A549 (cell line): ENCODE measurements at regions of chr19 and their contacts with region 1.

Region 1: DNA sequence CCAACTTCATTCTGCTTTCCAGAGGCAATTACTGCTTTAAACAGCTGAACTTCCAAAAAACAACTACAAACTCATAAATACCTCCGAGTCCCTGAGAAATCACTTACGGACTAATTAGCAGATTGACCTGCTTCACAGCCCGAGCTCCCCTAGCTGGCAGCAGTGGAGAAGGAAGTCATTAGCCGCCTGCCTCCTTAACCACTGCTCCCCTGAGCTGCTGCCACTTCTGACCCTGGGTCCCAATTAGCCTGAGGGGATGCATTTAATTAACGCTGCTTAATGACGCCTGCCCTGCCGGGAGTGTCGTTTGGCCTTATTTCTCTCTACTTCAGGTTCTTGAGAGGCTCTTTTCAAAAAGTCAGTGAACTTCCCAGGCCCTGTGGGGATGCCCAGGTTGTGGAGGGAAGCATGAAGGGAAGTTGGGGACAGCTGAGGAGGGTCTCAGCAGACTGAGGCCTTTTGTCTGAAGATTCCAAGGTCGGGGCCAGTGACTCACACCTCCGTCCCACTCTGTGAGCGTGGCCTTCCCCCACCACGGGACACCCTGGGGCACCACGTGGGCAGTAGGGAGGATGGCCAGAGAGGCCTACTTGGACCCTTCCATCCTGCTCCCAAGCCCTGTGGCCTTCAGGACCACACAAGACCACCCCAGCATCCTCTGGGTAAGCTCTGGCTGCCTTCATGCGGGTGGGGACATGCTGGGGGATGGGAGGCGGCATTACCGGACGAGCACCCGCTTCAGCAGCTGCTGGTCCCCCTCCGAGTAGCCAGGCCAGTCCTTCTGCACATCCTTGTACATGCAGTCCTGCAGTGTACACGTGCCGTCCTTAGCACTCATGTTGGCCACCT is 19.8 kb upstream of the ISYNA1 start:
- DNase-seq: no peak
- ATAC-seq: no peak
- H3K4me3 ChIP-seq: no peak overlapping the region
- H3K27ac ChIP-seq: no peak overlapping the region
- H3K4me1 ChIP-seq: peaks cover 24% of the 10 kb centered on the region
- CTCF ChIP-seq: no peak
- EP300 ChIP-seq: no peak
- POLR2A ChIP-seq: no peak
- RAD21 ChIP-seq: no peak

Region 2: DNA sequence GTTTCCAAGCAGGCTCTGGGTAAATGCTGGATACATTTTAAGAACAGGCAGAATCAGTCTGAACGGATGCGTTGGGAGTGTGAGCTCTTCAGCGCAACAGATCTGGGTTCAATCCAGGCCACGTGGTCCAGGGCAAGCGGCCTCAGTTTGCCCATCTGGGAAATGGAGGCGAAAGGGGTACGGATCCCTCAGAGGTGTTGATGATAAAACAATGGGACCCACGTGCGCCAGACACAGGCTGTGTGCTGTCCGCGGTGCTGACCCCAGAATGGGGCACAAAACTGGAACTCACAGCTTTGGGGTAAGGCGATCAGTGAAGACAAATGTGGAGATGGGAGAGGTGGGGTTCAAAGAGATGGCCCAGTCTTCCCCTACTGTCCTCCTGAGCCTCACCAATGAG is 218.4 kb before region 1 on chr19:
- CTCF ChIA-PET with region 1: no interaction called
- POLR2A ChIA-PET with region 1: no interaction called
- DNase-seq: no peak
- ATAC-seq: 0 out of 6 replicates have a peak, but pooled peaks of 1 of the 2 experiments have one; percentile 39
- H3K4me3 ChIP-seq: no peak overlapping the region
- H3K27ac ChIP-seq: no peak overlapping the region
- H3K4me1 ChIP-seq: no peaks in the 10 kb centered on the region
- CTCF ChIP-seq: no peak
- EP300 ChIP-seq: no peak
- POLR2A ChIP-seq: no peak
- RAD21 ChIP-seq: no peak

Region 3: DNA sequence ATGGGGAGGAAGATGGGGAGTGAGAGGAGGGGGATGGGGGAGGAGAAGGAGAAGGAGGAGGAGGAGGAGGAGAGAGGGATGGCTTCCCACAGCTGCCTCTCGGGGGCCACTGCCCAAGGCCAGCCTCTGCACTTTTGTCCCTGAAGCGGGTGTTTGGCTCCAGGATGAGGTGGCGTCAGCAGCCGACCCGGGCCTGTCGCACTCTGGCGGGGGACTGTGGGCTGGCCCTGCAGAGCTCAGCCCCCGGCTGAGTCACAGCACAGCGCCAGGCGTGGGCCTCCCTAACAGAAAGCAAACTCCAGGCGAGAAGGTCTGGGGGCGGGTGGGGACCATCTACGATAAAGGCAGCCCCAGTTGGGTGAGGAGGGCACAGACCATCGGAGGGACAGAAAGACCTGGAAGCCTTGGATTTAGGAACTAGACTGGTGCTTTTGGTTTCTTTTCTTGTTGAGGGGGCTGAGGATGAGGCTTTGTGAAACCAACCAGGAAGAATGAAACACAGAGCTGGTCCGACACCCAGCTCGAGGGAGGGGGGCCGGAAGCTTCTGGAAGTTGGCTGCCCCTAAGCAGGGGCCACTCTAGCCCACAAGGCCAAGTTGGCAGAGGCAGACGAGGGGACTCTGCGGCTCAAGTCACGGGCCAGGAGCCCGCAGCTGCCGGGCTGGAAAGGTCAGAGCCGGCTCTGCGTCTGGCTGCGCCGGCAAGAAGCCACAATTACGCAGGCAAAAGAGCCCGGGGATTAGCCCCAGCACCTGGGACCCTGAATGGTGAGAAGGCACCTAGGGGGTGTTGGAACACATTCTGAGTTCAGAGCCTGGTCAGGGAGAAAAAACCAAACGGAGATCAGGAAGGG is 153.0 kb before region 1 on chr19:
- CTCF ChIA-PET with region 1: no interaction called
- POLR2A ChIA-PET with region 1: no interaction called
- DNase-seq: peak in 1 of 2 experiments; percentile 79
- ATAC-seq: peak; percentile 77 to 79
- H3K4me3 ChIP-seq: peak overlapping the region; percentile 34
- H3K27ac ChIP-seq: peak overlapping the region; percentile 99 to 100
- H3K4me1 ChIP-seq: peaks cover 53% of the 10 kb centered on the region
- CTCF ChIP-seq: no peak
- EP300 ChIP-seq: no peak
- POLR2A ChIP-seq: no peak; the same call in 1 of the 2 replicates
- RAD21 ChIP-seq: no peak

Region 4: GRCh38 chr19:18364826-18365528 is 92.7 kb before region 1 on chr19:
- CTCF ChIA-PET with region 1: no interaction called
- POLR2A ChIA-PET with region 1: no interaction called
- DNase-seq: peak; percentile 71 to 98
- ATAC-seq: peak; percentile 82 to 83
- H3K4me3 ChIP-seq: no peak overlapping the region
- H3K27ac ChIP-seq: peak overlapping the region; percentile 97 to 99
- H3K4me1 ChIP-seq: peaks cover 45% of the 10 kb centered on the region
- CTCF ChIP-seq: no peak
- EP300 ChIP-seq: peak; percentile 97 to 98
- POLR2A ChIP-seq: no peak
- RAD21 ChIP-seq: no peak; a peak in 2 of 5 replicates

Region 5: DNA sequence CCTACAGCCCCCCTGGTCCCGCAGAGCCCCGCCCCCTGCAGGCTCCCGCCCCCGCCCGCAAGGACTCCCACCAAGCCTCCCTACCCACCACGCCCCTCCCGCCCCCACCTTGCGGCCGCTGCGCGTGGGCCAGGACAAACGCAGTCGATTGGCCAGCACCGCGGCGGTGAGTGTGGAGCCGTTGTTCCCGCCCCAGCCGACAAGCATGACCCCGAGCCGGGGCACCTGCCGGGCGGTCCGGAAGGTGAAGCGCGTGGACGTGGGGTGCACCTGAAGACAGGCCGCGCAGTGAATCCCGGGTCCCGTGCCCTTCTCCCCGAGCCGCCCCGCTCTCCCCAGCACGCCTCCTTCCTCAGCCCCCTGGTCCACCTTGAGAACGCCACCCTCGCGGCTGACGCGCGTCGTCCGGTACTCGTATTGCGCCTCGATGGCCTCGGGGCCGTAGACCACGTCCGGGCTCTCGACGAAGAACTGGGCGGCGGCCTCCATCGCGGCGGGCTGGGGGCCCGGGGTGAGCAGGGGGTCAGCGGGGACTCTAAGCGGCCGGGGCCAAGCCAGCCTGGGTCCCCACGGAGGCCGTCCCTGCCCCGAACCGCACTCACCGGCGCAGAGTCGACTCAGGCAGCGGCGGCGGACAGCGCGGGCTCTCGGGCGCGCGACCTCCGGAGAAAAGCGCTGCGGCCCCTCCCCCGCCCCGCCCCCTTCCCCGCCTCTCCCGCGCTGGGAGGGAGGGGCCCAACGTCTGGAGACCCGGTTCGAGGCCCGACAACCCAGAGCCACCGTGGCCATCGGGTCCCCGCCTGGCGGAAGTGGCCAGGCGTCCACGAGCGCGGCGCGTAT is 20.0 kb before region 1 on chr19 and contains the start of gene ISYNA1:
- CTCF ChIA-PET with region 1: interaction called, 14 read pairs
- POLR2A ChIA-PET with region 1: no interaction called
- DNase-seq: peak in 1 of 2 experiments; percentile 69
- ATAC-seq: peak; percentile 30 to 62
- H3K4me3 ChIP-seq: peak within 1 kb of the TSS; percentile 76
- H3K27ac ChIP-seq: peak within 1 kb of the TSS; percentile 82 to 96
- H3K4me1 ChIP-seq: peaks cover 30% of the 10 kb centered on the region
- CTCF ChIP-seq: no peak
- EP300 ChIP-seq: no peak
- POLR2A ChIP-seq: peak; percentile 16; the same call in 1 of the 2 replicates
- RAD21 ChIP-seq: no peak
- polyA plus RNA-seq, gene ISYNA1: 17.6 and 18.0 TPM in 2 replicates

Region 6: DNA sequence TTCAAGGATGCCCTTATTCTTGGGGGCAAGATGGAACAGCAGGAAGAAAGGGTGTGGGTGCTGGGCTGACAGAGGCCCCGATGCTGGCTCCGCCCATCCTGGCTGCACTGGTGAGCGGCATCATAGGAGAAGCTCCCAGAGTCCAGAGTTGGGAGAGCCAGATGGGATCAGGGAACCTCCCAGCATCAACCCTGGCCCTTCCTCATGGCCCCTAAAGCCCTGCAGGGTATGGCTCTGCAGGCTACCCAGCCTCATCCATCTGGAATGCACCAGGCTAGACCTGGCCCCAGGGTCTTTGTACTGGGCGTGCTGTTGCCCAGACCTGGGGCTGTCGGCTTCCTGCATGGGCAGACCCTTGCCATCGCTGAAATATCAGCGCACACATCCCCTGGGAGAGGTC is 72.1 kb after region 1 on chr19:
- CTCF ChIA-PET with region 1: no interaction called
- POLR2A ChIA-PET with region 1: no interaction called
- DNase-seq: no peak
- ATAC-seq: peak; percentile 56 to 62; a peak in 4 of 6 replicates
- H3K4me3 ChIP-seq: no peak overlapping the region
- H3K27ac ChIP-seq: no peak overlapping the region
- H3K4me1 ChIP-seq: no peaks in the 10 kb centered on the region
- CTCF ChIP-seq: no peak
- EP300 ChIP-seq: no peak
- POLR2A ChIP-seq: no peak
- RAD21 ChIP-seq: no peak